Psoas muscle (tissue), 8 donors: ENCODE measurements at regions of chr1 and their contacts with region 1.

Region 1: GRCh38 chr1:35564037-35564883 is 6.7 kb downstream of the NCDN start:
- DNase-seq: peak; percentile 78 to 85
- ATAC-seq: peak; percentile 34 to 61 (median 48)
- H3K4me3 ChIP-seq: no peak overlapping the region
- H3K27ac ChIP-seq: no peak overlapping the region
- H3K4me1 ChIP-seq: peaks cover 16% of the 10 kb centered on the region
- H3K27me3 ChIP-seq: no peaks in the 10 kb centered on the region
- CTCF ChIP-seq: peak; percentile 76

Region 2: DNA sequence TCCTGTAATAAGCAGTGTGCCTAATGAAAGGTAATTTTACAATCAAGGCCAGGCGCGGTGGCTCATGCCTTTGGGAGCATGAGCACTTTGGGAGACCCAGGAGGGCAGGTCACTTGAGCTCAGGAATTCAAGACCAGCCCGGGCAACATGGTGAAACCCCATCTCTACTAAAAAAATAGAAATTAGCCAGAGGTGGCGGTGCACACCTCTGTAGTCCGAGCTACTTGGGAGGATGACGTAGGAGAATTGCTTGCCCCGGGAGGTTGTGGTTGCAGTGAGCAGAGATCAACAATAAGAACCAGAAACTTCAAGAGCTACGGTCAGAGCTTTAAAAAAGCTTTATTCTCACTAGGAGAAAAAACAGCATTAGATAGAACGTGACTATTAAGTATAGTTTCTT is 406.4 kb before region 1 on chr1:
- intact Hi-C with region 1: no loop called
- DNase-seq: no peak
- ATAC-seq: no peak
- H3K4me3 ChIP-seq: no peak overlapping the region
- H3K27ac ChIP-seq: no peak overlapping the region
- H3K4me1 ChIP-seq: no peaks in the 10 kb centered on the region
- H3K27me3 ChIP-seq: no peaks in the 10 kb centered on the region
- CTCF ChIP-seq: no peak

Region 3: GRCh38 chr1:35192853-35193664 is 371.2 kb before region 1 on chr1 and contains the start of gene SFPQ:
- intact Hi-C with region 1: loop called in 1 of 2 experiments (anchors 10 kb)
- DNase-seq: peak; percentile 94 to 96
- ATAC-seq: peak; percentile 95 to 97 (median 96)
- H3K4me3 ChIP-seq: peak within 1 kb of the TSS; percentile 98
- H3K27ac ChIP-seq: peak within 1 kb of the TSS; percentile 100
- H3K4me1 ChIP-seq: peaks cover 37% of the 10 kb centered on the region
- H3K27me3 ChIP-seq: no peaks in the 10 kb centered on the region
- CTCF ChIP-seq: no peak
- total RNA-seq, gene SFPQ: 51.3 to 124 (median 102) TPM

Region 4: DNA sequence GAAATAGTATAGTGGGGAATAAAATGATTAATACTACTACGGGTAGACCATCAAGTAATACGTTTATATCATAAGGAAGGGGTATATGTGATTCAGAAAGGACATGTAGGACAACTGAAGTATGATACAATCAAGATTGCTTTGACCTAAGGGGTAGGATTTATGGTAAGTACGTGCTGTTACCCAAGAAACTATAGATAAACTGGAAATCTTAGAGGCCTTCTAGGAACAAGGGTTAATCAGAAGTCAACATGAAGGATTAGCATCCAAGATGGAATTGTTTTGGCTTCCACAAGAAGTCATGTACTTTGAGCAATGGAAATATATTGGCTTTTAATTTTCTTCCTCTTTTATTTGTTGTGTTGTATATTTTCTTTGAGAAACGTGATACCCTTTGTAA is 309.0 kb before region 1 on chr1:
- intact Hi-C with region 1: no loop called
- DNase-seq: no peak
- ATAC-seq: no peak
- H3K4me3 ChIP-seq: no peak overlapping the region
- H3K27ac ChIP-seq: no peak overlapping the region
- H3K4me1 ChIP-seq: no peaks in the 10 kb centered on the region
- H3K27me3 ChIP-seq: no peaks in the 10 kb centered on the region
- CTCF ChIP-seq: no peak

Region 5: GRCh38 chr1:35451125-35451528 is 113.1 kb before region 1 on chr1:
- intact Hi-C with region 1: loop called (anchors 2 to 5 kb)
- DNase-seq: peak; percentile 81 to 89
- ATAC-seq: peak; percentile 87 to 96 (median 93)
- H3K4me3 ChIP-seq: no peak overlapping the region
- H3K27ac ChIP-seq: no peak overlapping the region
- H3K4me1 ChIP-seq: peaks cover 9% of the 10 kb centered on the region
- H3K27me3 ChIP-seq: no peaks in the 10 kb centered on the region
- CTCF ChIP-seq: peak; percentile 77

Region 6: GRCh38 chr1:35641233-35641866 is 77.1 kb after region 1 on chr1 and contains the start of gene PSMB2:
- intact Hi-C with region 1: loop called in 1 of 2 experiments (anchors 5 kb)
- DNase-seq: peak; percentile 96 to 98
- ATAC-seq: peak; percentile 95 to 97 (median 96)
- H3K4me3 ChIP-seq: peak within 1 kb of the TSS; percentile 96
- H3K27ac ChIP-seq: peak within 1 kb of the TSS; percentile 95
- H3K4me1 ChIP-seq: peaks cover 34% of the 10 kb centered on the region
- H3K27me3 ChIP-seq: peaks cover 0 to 10% (median 0%) of the 10 kb centered on the region in 3 donors
- CTCF ChIP-seq: no peak
- total RNA-seq, gene PSMB2: 38.6 to 95.1 (median 67.5) TPM

Region 7: GRCh38 chr1:35726450-35727433 is 162.5 kb after region 1 on chr1:
- intact Hi-C with region 1: loop called in 1 of 2 experiments (anchors 1 kb)
- DNase-seq: peak; percentile 34 to 66
- ATAC-seq: peak; percentile 86 to 96 (median 88)
- H3K4me3 ChIP-seq: no peak overlapping the region
- H3K27ac ChIP-seq: no peak overlapping the region
- H3K4me1 ChIP-seq: no peaks in the 10 kb centered on the region
- H3K27me3 ChIP-seq: no peaks in the 10 kb centered on the region
- CTCF ChIP-seq: peak; percentile 81

Region 8: DNA sequence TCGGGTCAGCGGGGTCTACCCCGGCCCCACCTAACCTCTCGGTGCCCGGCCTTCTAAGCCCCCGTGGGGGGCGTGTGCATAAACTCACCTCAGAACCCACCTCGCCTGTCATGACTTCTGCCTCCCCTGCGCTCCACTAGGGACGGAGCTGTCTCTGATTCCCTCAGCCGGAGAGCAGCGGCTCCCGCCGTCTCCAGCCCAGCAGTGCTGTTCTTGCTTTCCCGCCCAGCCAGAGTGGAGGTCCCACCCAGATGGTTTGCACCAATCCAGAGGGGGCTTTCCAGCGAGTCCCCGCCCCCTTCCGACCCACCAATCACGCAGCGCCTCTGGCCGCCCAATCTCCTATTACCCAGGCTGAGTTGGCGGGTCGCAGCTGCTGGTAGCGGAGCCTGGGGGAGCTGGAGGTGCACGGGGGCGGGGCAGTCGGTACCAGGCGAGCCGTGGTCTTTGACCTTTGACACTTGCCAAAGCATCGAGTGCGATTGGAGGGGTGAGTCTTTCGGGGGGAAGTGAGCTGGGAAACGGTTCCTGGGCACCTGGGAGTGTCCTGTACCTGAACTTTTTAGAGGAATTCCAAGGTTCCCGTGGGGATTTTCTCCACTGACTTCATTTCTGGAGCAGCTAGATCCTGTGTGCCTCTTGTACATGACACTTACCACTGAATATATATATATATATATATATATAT is 205.6 kb after region 1 on chr1 and contains the start of gene CLSPN:
- intact Hi-C with region 1: loop called (anchors 1 to 5 kb)
- DNase-seq: peak; percentile 93 to 95
- ATAC-seq: peak; percentile 99 to 100 (median 100)
- H3K4me3 ChIP-seq: peak within 1 kb of the TSS; percentile 93
- H3K27ac ChIP-seq: peak within 1 kb of the TSS; percentile 15
- H3K4me1 ChIP-seq: peaks cover 8% of the 10 kb centered on the region
- H3K27me3 ChIP-seq: peaks cover 0 to 11% (median 0%) of the 10 kb centered on the region in 3 donors
- CTCF ChIP-seq: no peak
- total RNA-seq, gene CLSPN: 0.14 to 0.34 (median 0.15) TPM in 3 of 4 donors, not detected in the other

Region 9: DNA sequence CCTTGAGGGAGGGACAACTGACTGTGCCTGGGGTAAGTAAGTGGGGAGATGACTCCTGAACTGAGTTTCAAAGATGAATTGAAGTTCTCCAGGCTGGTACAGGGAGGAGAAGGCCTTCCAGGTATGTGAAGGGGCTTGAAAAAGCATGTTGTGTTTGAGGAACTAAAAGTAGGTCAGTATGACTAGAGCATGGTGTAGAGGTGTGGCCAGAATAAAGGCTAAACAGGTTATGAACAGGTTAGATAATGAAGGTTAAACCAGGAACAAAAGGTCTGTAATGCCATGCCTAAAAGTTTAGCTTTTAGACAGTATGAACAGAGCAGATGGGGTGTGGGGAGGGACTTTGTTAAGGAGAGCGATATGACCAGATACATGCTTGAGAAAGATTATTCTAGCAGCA is 212.8 kb after region 1 on chr1:
- intact Hi-C with region 1: loop called (anchors 1 to 5 kb)
- DNase-seq: no peak
- ATAC-seq: no peak
- H3K4me3 ChIP-seq: no peak overlapping the region
- H3K27ac ChIP-seq: no peak overlapping the region
- H3K4me1 ChIP-seq: no peaks in the 10 kb centered on the region
- H3K27me3 ChIP-seq: no peaks in the 10 kb centered on the region
- CTCF ChIP-seq: no peak